ENCODE measurements at regions of chr5 and their contacts with region 1.

Region 1: GRCh38 chr5:126339215-126339805 is 83.9 kb upstream of the GRAMD2B start:
- DNase-seq: no peak
- ATAC-seq: peak in 1 of 2 donors; percentile 48
- H3K4me3 ChIP-seq: no peak overlapping the region
- H3K27ac ChIP-seq: no peak overlapping the region
- H3K4me1 ChIP-seq: no peaks in the 10 kb centered on the region
- H3K27me3 ChIP-seq: no peaks in the 10 kb centered on the region

Region 2: DNA sequence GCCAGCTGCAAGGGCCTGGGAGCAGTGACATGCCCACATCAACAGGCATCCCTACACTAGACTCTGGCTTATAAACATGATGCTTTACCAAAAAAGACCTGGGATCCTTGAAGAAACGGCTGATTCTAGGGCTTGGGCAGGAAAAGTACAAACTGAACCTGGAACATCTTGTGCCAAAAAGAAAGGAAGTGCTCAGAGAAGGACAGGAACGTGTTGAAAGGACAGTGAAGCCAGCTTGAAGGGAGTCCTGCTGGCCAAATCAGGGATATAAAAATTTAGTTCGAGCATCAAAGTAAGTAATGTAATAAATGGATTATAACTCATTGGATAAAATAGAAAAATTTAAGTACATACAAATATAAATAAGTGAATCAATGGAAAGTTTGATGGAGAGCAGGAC is 197.6 kb after region 1 on chr5:
- intact Hi-C with region 1: loop called in 1 of 4 experiments (anchors 5 kb)
- DNase-seq: no peak
- ATAC-seq: no peak
- H3K4me3 ChIP-seq: no peak overlapping the region
- H3K27ac ChIP-seq: no peak overlapping the region
- H3K4me1 ChIP-seq: peaks cover 2% of the 10 kb centered on the region
- H3K27me3 ChIP-seq: no peaks in the 10 kb centered on the region

Region 3: DNA sequence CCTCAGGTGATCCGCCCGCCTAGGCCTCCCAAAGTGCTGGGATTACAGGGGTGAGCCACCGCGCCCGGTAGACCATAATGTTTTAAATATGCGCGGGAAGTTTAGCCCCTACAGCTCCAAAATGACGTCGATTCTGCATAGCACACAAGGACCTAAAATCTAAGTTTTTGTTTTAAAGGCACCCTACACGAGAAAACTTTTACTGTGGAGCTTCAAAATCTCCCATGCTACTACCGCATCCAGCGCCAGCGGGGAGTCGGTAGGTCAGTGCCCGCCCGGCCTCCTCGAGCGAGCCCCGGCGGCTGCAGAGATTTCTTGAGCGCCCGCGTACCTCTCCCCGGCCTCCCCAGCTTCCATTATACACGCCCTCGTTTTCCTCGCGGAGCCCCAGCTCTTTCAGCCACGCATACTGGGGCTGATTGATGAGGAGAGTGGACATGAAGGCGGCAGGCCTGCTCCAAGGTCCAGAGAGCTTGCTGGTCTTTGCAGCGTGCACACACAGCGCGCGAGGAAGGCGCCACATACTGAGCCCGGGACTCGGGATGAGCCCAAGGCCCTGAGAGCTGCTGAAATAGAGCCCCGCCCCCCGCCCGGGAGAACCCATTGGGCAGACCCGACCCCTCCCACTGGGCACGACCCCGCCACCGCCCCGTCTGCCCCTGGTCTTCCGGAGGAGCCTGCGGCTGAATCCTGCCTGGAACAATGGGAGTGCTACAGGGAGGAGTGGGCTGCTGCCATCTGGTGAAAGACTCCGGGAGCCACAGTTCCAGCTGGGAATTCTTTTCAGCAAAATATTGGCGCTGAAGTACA is 255.6 kb after region 1 on chr5 and contains the start of gene ALDH7A1:
- intact Hi-C with region 1: loop called in 1 of 4 experiments (anchors 5 kb)
- DNase-seq: peak; percentile 93 to 97 (median 97)
- ATAC-seq: peak; percentile 99
- H3K4me3 ChIP-seq: peak within 1 kb of the TSS; percentile 98
- H3K27ac ChIP-seq: peak within 1 kb of the TSS; percentile 98
- H3K4me1 ChIP-seq: no peaks in the 10 kb centered on the region
- H3K27me3 ChIP-seq: no peaks in the 10 kb centered on the region
- total RNA-seq, gene ALDH7A1: 26.1 to 50.3 (median 32.7) TPM